ENCODE measurements at regions of chr1 and their contacts with region 1.

Region 1: DNA sequence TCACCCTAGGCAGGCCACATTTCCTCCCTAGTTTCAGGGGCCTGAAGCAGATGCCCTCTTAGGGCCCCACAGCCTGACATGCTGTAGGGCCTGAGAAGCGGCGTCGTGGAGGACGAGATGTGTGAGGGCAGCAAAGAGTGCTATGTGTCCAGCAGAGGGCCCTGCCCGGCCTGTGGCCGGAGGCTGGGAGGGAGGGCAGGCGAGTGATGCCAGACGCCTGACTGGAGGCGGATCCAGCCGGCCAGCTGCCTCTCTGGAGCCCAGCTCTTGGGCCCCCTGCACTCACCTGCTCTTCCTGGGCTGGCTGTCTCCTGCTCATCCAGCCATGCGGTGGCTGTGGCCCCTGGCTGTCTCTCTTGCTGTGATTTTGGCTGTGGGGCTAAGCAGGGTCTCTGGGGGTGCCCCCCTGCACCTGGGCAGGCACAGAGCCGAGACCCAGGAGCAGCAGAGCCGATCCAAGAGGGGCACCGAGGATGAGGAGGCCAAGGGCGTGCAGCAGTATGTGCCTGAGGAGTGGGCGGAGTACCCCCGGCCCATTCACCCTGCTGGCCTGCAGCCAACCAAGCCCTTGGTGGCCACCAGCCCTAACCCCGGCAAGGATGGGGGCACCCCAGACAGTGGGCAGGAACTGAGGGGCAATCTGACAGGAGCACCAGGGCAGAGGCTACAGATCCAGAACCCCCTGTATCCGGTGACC is at the start of gene GPR37L1:
- DNase-seq: peak; percentile 50
- ATAC-seq: peak; percentile 84
- H3K4me3 ChIP-seq: no peak within 1 kb of the TSS
- H3K27ac ChIP-seq: no peak within 1 kb of the TSS
- H3K4me1 ChIP-seq: no peaks in the 10 kb centered on the region
- H3K27me3 ChIP-seq: peaks cover 24% of the 10 kb centered on the region
- CTCF ChIP-seq: peak; percentile 58
- POLR2A ChIP-seq: no peak
- RAD21 ChIP-seq: peak; percentile 36
- total RNA-seq, gene GPR37L1: not detected in 2 replicates

Region 2: DNA sequence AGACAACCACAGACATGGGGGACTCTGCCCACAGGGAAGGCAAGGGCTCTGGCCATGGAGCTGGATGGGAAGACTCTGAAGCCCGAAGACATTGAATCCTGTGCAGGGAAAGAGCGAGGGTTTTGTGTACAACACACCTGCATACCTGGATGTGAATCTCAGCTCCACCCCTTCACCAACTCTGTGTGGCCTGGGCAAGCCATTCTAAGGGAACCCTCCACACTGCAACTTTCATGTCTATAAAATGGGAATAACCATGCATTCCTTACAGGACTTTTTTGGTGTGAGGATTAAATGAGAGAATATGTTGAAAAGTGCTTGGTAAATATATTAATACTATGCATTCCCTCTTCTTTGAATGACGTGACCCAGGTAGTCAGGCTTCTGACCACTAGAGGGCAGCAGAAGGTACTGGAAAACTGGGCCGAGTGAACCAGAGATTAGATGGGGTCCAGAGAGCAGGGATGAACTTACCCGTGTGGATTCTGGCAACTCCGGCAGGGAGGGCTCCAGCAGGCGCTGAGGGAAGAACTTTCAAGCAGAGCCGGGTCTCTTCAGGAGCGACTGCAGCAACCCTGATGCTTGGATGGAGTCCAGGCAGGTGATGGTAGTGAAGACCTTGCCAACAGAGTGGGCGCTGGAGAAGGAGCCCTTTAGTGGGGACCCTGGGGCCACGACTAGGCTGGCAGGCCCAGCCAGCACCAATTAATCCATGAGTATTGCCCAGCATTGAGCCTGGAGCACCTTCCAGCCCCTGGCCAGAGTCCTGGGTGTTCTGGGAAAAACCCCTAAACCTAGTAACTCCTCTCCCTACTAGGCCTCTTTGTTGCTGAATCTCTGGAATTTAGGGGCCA is 113.2 kb before region 1 on chr1:
- CTCF ChIA-PET with region 1: interaction called, 5 read pairs
- POLR2A ChIA-PET with region 1: no interaction called
- dilution Hi-C with region 1: no loop called
- in situ Hi-C with region 1: loop called (anchors 5 kb)
- intact Hi-C with region 1: loop called (anchors 1 kb)
- DNase-seq: peak; percentile 76
- ATAC-seq: peak; percentile 89
- H3K4me3 ChIP-seq: no peak overlapping the region
- H3K27ac ChIP-seq: no peak overlapping the region
- H3K4me1 ChIP-seq: peaks cover 2% of the 10 kb centered on the region; the same call in 1 of the 2 replicates
- H3K27me3 ChIP-seq: 0 out of 2 replicates have a peak, but pooled peaks cover 2% of the 10 kb centered on the region
- CTCF ChIP-seq: peak; percentile 94
- POLR2A ChIP-seq: no peak
- RAD21 ChIP-seq: peak; percentile 91

Region 3: GRCh38 chr1:202073206-202073605 is 49.6 kb before region 1 on chr1:
- CTCF ChIA-PET with region 1: interaction called, 10 read pairs
- POLR2A ChIA-PET with region 1: no interaction called
- dilution Hi-C with region 1: no loop called
- in situ Hi-C with region 1: no loop called
- intact Hi-C with region 1: no loop called
- DNase-seq: no peak
- ATAC-seq: no peak
- H3K4me3 ChIP-seq: no peak overlapping the region
- H3K27ac ChIP-seq: no peak overlapping the region
- H3K4me1 ChIP-seq: peaks cover 8% of the 10 kb centered on the region
- H3K27me3 ChIP-seq: no peaks in the 10 kb centered on the region
- CTCF ChIP-seq: no peak
- POLR2A ChIP-seq: no peak
- RAD21 ChIP-seq: no peak

Region 4: GRCh38 chr1:202135221-202135721 is 12.5 kb after region 1 on chr1:
- CTCF ChIA-PET with region 1: interaction called, 5 read pairs
- POLR2A ChIA-PET with region 1: no interaction called
- dilution Hi-C with region 1: no loop called
- in situ Hi-C with region 1: no loop called
- intact Hi-C with region 1: loop called (anchors 1 kb)
- DNase-seq: peak; percentile 54
- ATAC-seq: peak; percentile 93
- H3K4me3 ChIP-seq: no peak overlapping the region
- H3K27ac ChIP-seq: no peak overlapping the region
- H3K4me1 ChIP-seq: 0 out of 2 replicates have a peak, but pooled peaks cover 1% of the 10 kb centered on the region
- H3K27me3 ChIP-seq: no peaks in the 10 kb centered on the region
- CTCF ChIP-seq: peak; percentile 78
- POLR2A ChIP-seq: no peak
- RAD21 ChIP-seq: peak; percentile 72

Measured in IMR-90 (cell line).